ENCODE measurements at regions of chr10 and their contacts with region 1.

Region 1: DNA sequence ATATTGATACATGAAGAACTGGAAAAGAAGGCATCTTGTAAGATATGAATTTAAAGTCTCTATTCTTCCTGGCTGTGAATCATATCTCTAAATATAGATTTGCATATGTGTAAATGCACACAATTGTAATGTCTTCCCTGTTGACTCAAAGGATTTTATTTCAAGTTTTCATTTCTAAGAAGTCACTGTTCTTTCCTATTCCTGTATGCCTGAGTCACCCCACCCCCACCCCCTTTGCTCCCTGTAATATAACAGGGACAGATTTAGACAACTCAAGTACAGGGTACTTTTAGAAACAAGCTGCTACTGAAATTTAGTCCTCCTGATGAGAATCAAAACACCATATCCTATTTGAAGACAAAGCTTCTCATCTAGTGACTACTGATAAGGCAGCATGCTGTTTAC is 43.0 kb upstream of the HECTD2 start:
- DNase-seq: peak in 1 of 2 donors; percentile 18
- ATAC-seq: peak; percentile 82 to 93
- H3K4me3 ChIP-seq: no peak overlapping the region
- H3K27ac ChIP-seq: peak overlapping the region; percentile 52 to 83 (median 80)
- H3K4me1 ChIP-seq: peaks cover 9 to 14% of the 10 kb centered on the region in 2 donors
- H3K27me3 ChIP-seq: no peaks in the 10 kb centered on the region
- CTCF ChIP-seq: no peak
- POLR2A ChIP-seq: no peak

Region 2: GRCh38 chr10:91298224-91298871 is 68.8 kb before region 1 on chr10:
- in situ Hi-C with region 1: loop called in 1 of 4 experiments (anchors 5 kb)
- intact Hi-C with region 1: loop called (anchors 1 kb)
- DNase-seq: peak; percentile 57 to 72
- ATAC-seq: peak; percentile 87 to 94
- H3K4me3 ChIP-seq: peak overlapping the region; percentile 29 to 64 (median 38)
- H3K27ac ChIP-seq: peak overlapping the region in 1 of 4 donors; percentile 32
- H3K4me1 ChIP-seq: peaks cover 4 to 5% of the 10 kb centered on the region in 2 donors
- H3K27me3 ChIP-seq: no peaks in the 10 kb centered on the region
- CTCF ChIP-seq: peak; percentile 91 to 98 (median 94)
- POLR2A ChIP-seq: peak in 1 of 2 donors; percentile 3

Region 3: DNA sequence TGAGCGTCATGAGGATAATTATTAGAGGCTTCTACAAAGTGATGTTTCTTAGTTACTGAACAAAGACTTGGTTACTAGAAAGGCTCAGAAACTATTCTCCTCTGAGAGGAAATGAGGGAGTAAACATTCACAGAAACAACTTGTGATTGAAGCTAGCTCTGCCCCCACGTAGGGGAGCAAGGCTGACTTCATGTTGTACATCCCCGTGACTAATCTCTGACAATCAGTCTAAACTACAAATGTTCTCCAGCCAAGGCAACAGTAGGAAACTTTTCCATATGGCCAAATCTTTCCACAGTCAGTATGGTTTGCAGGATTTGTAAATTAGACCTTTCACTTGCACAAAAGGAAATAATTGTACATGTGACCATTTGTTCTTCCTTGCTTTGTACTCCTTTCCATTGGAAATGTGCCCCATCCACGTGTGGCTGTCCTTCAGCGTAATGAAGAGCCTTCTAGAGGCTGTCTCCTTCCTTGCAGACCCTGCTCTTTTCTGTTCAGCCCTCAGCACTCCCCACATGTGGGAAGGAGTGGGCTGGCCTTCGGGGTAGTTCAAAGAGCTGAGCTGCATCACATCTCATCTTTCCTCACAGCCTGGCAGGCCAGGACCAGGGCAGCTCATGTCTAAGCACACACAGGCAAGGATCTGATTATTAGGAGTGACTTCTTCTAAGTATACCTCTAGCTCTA is 53.2 kb before region 1 on chr10:
- in situ Hi-C with region 1: no loop called
- intact Hi-C with region 1: no loop called
- DNase-seq: no peak
- ATAC-seq: no peak
- H3K4me3 ChIP-seq: no peak overlapping the region
- H3K27ac ChIP-seq: no peak overlapping the region
- H3K4me1 ChIP-seq: no peaks in the 10 kb centered on the region
- H3K27me3 ChIP-seq: no peaks in the 10 kb centered on the region
- CTCF ChIP-seq: no peak
- POLR2A ChIP-seq: no peak

Region 4: DNA sequence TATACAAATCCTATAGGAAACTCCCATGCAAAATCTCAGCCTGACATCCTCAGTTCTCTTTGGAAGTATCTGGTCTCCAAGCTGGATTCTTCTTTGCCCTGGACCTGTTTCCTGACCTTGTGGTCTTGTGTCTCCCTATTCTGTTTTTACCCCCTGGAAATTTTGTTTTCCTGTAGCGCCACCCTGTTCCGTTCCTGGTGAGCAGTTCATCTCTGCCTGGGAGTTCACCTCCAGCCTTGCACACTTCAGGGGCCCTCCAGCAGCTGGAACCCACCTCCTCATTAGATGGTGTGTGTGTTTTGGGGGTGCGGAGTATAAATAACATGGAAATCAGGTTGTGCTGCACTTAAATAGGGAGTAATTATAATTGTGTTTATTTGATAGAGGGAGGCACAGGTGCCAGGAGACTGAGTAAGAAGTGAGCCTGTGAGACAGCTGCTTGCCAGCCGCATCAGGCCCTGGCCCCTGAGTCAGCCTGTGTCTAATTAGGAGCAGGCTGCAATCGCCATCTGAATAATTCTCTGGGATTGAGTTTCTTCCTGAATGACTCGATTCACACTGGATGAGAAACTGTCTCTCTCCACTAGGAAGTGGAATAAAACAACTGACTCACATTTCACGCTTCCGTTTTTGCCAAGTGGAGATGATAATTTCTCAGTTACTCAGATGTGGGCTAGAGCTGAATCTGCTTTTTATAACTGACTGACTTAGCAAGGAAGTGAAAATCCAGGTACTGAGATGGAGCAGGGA is 26.3 kb before region 1 on chr10:
- in situ Hi-C with region 1: no loop called
- intact Hi-C with region 1: loop called (anchors 1 kb)
- DNase-seq: peak; percentile 78 to 81
- ATAC-seq: peak; percentile 97 to 99
- H3K4me3 ChIP-seq: no peak overlapping the region
- H3K27ac ChIP-seq: peak overlapping the region; percentile 73 to 86 (median 82)
- H3K4me1 ChIP-seq: peaks cover 26 to 32% of the 10 kb centered on the region in 2 donors
- H3K27me3 ChIP-seq: no peaks in the 10 kb centered on the region
- CTCF ChIP-seq: peak in 1 of 5 experiments; percentile 18
- POLR2A ChIP-seq: no peak

Measured in gastrocnemius medialis (tissue), 4 donors.